ENCODE measurements at regions of chr7 and their contacts with region 1.

Region 1: DNA sequence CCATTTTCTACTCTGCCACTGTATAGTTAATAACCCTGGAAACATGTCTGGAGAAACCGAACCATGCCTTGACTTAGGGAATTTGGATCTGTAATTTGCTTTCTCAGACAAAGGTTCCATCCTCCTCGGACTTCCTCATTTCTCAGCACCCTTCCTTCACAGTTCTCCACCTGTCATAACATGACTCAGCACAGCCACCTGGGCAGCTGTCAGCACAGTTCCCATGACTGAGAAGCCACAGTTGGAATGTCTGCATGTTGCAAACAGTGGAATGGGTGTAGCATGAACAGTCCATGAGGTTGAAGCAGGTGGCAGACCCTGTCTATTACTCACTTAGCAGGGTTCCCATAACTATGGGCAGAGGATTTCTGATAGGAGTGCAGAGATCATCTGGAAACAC is 634 bp upstream of the OR9A4 start:
- DNase-seq: no peak
- ATAC-seq: no peak
- H3K4me3 ChIP-seq: no peak overlapping the region
- H3K27ac ChIP-seq: no peak overlapping the region
- H3K4me1 ChIP-seq: no peaks in the 10 kb centered on the region
- H3K27me3 ChIP-seq: no peaks in the 10 kb centered on the region
- CTCF ChIP-seq: no peak

Region 2: GRCh38 chr7:140475747-140476348 is 1439.7 kb before region 1 on chr7:
- CTCF ChIA-PET with region 1: interaction called, 10 read pairs
- POLR2A ChIA-PET with region 1: no interaction called
- in situ Hi-C with region 1: no loop called
- intact Hi-C with region 1: no loop called
- DNase-seq: no peak
- ATAC-seq: no peak
- H3K4me3 ChIP-seq: no peak overlapping the region
- H3K27ac ChIP-seq: no peak overlapping the region
- H3K4me1 ChIP-seq: 0 out of 2 replicates have a peak, but pooled peaks cover 10% of the 10 kb centered on the region
- H3K27me3 ChIP-seq: no peaks in the 10 kb centered on the region
- CTCF ChIP-seq: no peak; the same call in 1 of the 2 replicates

Region 3: GRCh38 chr7:142412551-142413193 is 497.1 kb after region 1 on chr7:
- CTCF ChIA-PET with region 1: no interaction called
- POLR2A ChIA-PET with region 1: no interaction called
- in situ Hi-C with region 1: no loop called
- intact Hi-C with region 1: no loop called
- DNase-seq: peak; percentile 30
- ATAC-seq: peak; percentile 58; the same call in 1 of the 2 replicates
- H3K4me3 ChIP-seq: no peak overlapping the region
- H3K27ac ChIP-seq: no peak overlapping the region
- H3K4me1 ChIP-seq: no peaks in the 10 kb centered on the region
- H3K27me3 ChIP-seq: no peaks in the 10 kb centered on the region
- CTCF ChIP-seq: peak; percentile 72

Measured in Panc1 (cell line).